ENCODE measurements at regions of chr1 and their contacts with region 1.

Region 1: GRCh38 chr1:202315576-202316168 is 26.1 kb downstream of the UBE2T start:
- DNase-seq: peak; percentile 79
- H3K4me3 ChIP-seq: no peak overlapping the region
- H3K27ac ChIP-seq: no peak overlapping the region
- H3K4me1 ChIP-seq: peaks cover 9% of the 10 kb centered on the region
- H3K27me3 ChIP-seq: no peaks in the 10 kb centered on the region
- CTCF ChIP-seq: peak; percentile 95 to 98
- POLR2A ChIP-seq: no peak

Region 2: DNA sequence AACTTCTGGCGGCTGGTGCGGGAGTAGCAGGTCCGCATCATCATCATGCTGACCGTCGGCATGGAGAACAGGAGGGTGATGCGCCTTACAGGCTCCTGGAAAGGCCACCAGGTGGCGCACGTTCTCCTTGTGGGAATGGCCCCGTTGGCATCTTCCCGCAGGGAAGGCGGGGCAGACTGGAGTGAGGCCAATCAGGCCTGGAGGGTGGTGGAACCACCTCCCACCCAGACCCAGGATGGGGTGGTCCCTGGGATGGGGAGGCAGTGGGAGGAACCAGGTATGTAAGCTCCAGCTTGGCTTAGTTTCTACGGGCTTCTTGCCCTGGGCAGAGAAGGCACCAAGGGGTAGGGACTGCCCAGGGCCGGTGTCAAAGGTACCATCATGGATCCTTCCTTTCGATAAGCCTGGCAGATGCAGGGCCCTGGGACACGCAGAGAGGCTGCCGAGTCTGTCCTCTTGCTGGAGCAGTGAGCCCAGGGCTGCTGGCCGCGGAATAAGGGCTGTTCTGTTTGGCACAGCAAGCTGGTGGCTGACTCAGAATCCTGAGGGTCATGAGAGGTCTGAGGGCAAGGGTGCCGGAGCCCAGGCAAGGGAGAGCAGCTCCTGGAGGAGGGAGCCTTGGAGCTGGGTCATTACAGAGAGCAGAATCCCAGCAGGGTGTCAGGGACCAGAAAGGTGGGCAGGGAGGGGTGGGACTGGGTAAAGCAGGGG is 130.8 kb before region 1 on chr1:
- CTCF ChIA-PET with region 1: interaction called, 107 read pairs
- POLR2A ChIA-PET with region 1: no interaction called
- dilution Hi-C with region 1: no loop called
- intact Hi-C with region 1: loop called (anchors 1 kb)
- DNase-seq: peak; percentile 83
- H3K4me3 ChIP-seq: no peak overlapping the region
- H3K27ac ChIP-seq: no peak overlapping the region
- H3K4me1 ChIP-seq: no peaks in the 10 kb centered on the region
- H3K27me3 ChIP-seq: peaks cover 8 to 13% of the 10 kb centered on the region in 2 experiments
- CTCF ChIP-seq: peak; percentile 90 to 92
- POLR2A ChIP-seq: no peak

Region 3: GRCh38 chr1:202207292-202207691 is 108.4 kb before region 1 on chr1:
- CTCF ChIA-PET with region 1: interaction called, 6 read pairs
- POLR2A ChIA-PET with region 1: no interaction called
- dilution Hi-C with region 1: loop called (anchors 25 kb)
- intact Hi-C with region 1: no loop called
- DNase-seq: peak; percentile 70
- H3K4me3 ChIP-seq: no peak overlapping the region
- H3K27ac ChIP-seq: no peak overlapping the region
- H3K4me1 ChIP-seq: no peaks in the 10 kb centered on the region
- H3K27me3 ChIP-seq: peaks cover 3% of the 10 kb centered on the region in 2 experiments
- CTCF ChIP-seq: peak in 1 of 2 donors; percentile 36
- POLR2A ChIP-seq: no peak

Region 4: GRCh38 chr1:202235856-202236837 is 79.5 kb before region 1 on chr1:
- CTCF ChIA-PET with region 1: interaction called, 6 read pairs
- POLR2A ChIA-PET with region 1: no interaction called
- dilution Hi-C with region 1: no loop called
- intact Hi-C with region 1: loop called (anchors 1 kb)
- DNase-seq: peak; percentile 56
- H3K4me3 ChIP-seq: no peak overlapping the region
- H3K27ac ChIP-seq: peak overlapping the region; percentile 49
- H3K4me1 ChIP-seq: peaks cover 13% of the 10 kb centered on the region
- H3K27me3 ChIP-seq: peaks cover 0 to 4% of the 10 kb centered on the region in 2 experiments
- CTCF ChIP-seq: peak; percentile 80 to 88
- POLR2A ChIP-seq: no peak

Region 5: DNA sequence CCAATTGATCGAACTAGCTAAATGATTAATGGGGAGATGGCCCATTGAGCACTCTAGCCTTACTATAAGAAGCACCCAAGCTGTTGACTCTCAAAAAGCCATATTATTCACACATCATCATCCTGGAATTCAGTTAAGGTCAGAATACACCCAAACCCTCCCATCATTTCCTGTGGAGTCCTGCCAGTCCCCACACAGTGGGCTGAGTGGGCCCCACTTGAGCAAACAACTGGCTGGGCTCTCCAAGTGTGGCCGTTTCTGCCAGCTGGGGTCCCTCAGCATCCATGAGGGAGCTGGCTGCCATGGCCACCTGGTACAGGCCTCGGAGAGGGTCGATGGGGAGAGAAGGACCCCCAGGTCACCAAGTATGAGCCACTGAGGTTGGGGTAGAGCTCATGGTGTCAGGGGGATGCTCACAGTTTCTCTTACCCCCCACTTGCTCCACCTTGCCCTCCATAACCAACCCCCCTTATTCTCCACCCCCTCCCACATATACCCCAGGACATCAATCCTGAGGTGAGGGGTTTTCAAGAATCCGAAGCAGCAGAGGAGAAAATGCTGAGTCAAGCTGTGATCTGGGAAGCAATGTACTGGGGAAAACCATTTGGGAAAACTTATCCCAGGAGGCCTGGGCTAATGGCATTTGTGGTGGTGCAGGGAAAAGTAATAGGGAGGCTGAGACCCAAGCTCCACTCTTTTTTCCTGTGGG is 34.2 kb before region 1 on chr1:
- CTCF ChIA-PET with region 1: interaction called, 33 read pairs
- POLR2A ChIA-PET with region 1: no interaction called
- dilution Hi-C with region 1: no loop called
- intact Hi-C with region 1: no loop called
- DNase-seq: peak; percentile 63
- H3K4me3 ChIP-seq: no peak overlapping the region
- H3K27ac ChIP-seq: peak overlapping the region; percentile 79
- H3K4me1 ChIP-seq: peaks cover 78% of the 10 kb centered on the region
- H3K27me3 ChIP-seq: no peaks in the 10 kb centered on the region
- CTCF ChIP-seq: no peak
- POLR2A ChIP-seq: peak; percentile 52

Region 6: GRCh38 chr1:202365092-202365815 is 49.6 kb after region 1 on chr1:
- CTCF ChIA-PET with region 1: no interaction called
- POLR2A ChIA-PET with region 1: no interaction called
- dilution Hi-C with region 1: no loop called
- intact Hi-C with region 1: no loop called
- DNase-seq: no peak
- H3K4me3 ChIP-seq: no peak overlapping the region
- H3K27ac ChIP-seq: no peak overlapping the region
- H3K4me1 ChIP-seq: no peaks in the 10 kb centered on the region
- H3K27me3 ChIP-seq: no peaks in the 10 kb centered on the region
- CTCF ChIP-seq: no peak
- POLR2A ChIP-seq: no peak

Region 7: GRCh38 chr1:202397256-202397655 is 81.6 kb after region 1 on chr1:
- CTCF ChIA-PET with region 1: no interaction called
- POLR2A ChIA-PET with region 1: no interaction called
- dilution Hi-C with region 1: no loop called
- intact Hi-C with region 1: no loop called
- DNase-seq: peak; percentile 2
- H3K4me3 ChIP-seq: no peak overlapping the region
- H3K27ac ChIP-seq: no peak overlapping the region
- H3K4me1 ChIP-seq: no peaks in the 10 kb centered on the region
- H3K27me3 ChIP-seq: no peaks in the 10 kb centered on the region
- CTCF ChIP-seq: no peak
- POLR2A ChIP-seq: no peak

Measured in endothelial cell of umbilical vein (primary cell).